Calu3 (cell line): ENCODE measurements at regions of chr18 and their contacts with region 1.

Region 1: GRCh38 chr18:65725251-65726050 is 25.4 kb upstream of the CDH7 start:
- DNase-seq: peak; percentile 69
- H3K4me3 Mint-ChIP-seq: no peak overlapping the region
- H3K27ac Mint-ChIP-seq: no peak overlapping the region
- H3K4me1 Mint-ChIP-seq: peaks cover 22% of the 10 kb centered on the region
- H3K27me3 Mint-ChIP-seq: no peaks in the 10 kb centered on the region
- CTCF ChIP-seq: peak; percentile 73

Region 2: GRCh38 chr18:65671621-65672415 is 53.6 kb before region 1 on chr18:
- CTCF ChIA-PET with region 1: no interaction called
- intact Hi-C with region 1: no loop called
- DNase-seq: no peak
- H3K4me3 Mint-ChIP-seq: no peak overlapping the region
- H3K27ac Mint-ChIP-seq: no peak overlapping the region
- H3K4me1 Mint-ChIP-seq: no peaks in the 10 kb centered on the region
- H3K27me3 Mint-ChIP-seq: no peaks in the 10 kb centered on the region
- CTCF ChIP-seq: no peak

Region 3: GRCh38 chr18:65753520-65753919 is 28.1 kb after region 1 on chr18:
- CTCF ChIA-PET with region 1: interaction called, 6 read pairs
- intact Hi-C with region 1: loop called (anchors 2 kb)
- DNase-seq: peak; percentile 50
- H3K4me3 Mint-ChIP-seq: no peak overlapping the region
- H3K27ac Mint-ChIP-seq: no peak overlapping the region
- H3K4me1 Mint-ChIP-seq: peaks cover 18% of the 10 kb centered on the region
- H3K27me3 Mint-ChIP-seq: no peaks in the 10 kb centered on the region
- CTCF ChIP-seq: peak; percentile 60

Region 4: DNA sequence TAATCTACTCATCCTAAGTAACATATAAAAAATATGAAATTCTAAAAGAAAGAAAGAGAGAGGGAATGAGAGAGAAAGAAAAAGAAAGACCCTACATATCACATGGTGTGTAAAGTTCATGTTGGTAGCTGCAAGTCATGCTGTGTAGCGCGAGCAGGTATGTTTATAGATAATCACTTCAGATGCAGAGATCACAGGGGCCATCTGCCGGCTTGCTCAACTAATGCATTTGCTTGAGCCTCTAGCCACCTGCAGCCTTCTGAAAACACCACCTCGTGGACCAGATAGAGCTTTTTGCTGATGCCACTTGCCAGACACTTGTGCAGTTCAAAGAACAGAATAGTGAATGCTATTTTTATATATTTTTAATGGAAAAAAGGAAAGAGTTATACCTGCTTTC is 62.9 kb after region 1 on chr18:
- CTCF ChIA-PET with region 1: interaction called, 5 read pairs
- intact Hi-C with region 1: loop called (anchors 2 kb)
- DNase-seq: peak; percentile 39
- H3K4me3 Mint-ChIP-seq: no peak overlapping the region
- H3K27ac Mint-ChIP-seq: no peak overlapping the region
- H3K4me1 Mint-ChIP-seq: no peaks in the 10 kb centered on the region
- H3K27me3 Mint-ChIP-seq: no peaks in the 10 kb centered on the region
- CTCF ChIP-seq: no peak

Region 5: DNA sequence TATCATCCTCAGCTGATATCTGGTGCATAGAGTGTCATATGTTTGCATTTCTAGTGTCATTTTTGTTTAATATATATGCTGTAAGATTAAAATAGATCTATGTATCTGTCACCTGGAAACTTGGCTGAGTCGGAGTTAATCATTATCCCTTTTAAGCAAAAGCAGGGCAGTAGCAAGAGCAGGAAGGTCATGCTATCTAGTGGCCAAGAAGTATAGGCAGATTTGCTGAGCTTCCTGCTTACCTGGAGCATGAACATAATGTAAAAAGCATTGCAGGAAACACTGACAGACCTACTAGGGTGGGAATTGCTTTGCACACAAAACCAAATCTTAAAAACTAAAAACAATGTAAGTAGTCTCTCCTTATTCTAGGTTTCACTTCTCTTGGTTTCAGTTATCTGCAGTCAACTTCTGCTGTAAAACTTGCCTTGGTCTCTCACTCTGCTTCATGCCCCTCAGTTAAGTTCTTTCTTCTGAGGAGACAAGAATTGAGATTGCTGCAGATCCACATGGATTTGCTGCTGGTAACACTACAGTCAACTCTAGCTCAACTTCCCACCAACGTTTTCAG is 320.7 kb after region 1 on chr18:
- CTCF ChIA-PET with region 1: interaction called, 4 read pairs
- intact Hi-C with region 1: loop called (anchors 5 kb)
- DNase-seq: peak; percentile 6
- H3K4me3 Mint-ChIP-seq: no peak overlapping the region
- H3K27ac Mint-ChIP-seq: no peak overlapping the region
- H3K4me1 Mint-ChIP-seq: peaks cover 15% of the 10 kb centered on the region
- H3K27me3 Mint-ChIP-seq: no peaks in the 10 kb centered on the region
- CTCF ChIP-seq: no peak

Region 6: GRCh38 chr18:66872277-66872676 is 1146.8 kb after region 1 on chr18:
- CTCF ChIA-PET with region 1: no interaction called
- intact Hi-C with region 1: loop called (anchors 10 kb)
- DNase-seq: no peak
- H3K4me3 Mint-ChIP-seq: no peak overlapping the region
- H3K27ac Mint-ChIP-seq: no peak overlapping the region
- H3K4me1 Mint-ChIP-seq: peaks cover 13% of the 10 kb centered on the region
- H3K27me3 Mint-ChIP-seq: no peaks in the 10 kb centered on the region
- CTCF ChIP-seq: no peak